ENCODE measurements at regions of chr2 and their contacts with region 1.

Region 1: DNA sequence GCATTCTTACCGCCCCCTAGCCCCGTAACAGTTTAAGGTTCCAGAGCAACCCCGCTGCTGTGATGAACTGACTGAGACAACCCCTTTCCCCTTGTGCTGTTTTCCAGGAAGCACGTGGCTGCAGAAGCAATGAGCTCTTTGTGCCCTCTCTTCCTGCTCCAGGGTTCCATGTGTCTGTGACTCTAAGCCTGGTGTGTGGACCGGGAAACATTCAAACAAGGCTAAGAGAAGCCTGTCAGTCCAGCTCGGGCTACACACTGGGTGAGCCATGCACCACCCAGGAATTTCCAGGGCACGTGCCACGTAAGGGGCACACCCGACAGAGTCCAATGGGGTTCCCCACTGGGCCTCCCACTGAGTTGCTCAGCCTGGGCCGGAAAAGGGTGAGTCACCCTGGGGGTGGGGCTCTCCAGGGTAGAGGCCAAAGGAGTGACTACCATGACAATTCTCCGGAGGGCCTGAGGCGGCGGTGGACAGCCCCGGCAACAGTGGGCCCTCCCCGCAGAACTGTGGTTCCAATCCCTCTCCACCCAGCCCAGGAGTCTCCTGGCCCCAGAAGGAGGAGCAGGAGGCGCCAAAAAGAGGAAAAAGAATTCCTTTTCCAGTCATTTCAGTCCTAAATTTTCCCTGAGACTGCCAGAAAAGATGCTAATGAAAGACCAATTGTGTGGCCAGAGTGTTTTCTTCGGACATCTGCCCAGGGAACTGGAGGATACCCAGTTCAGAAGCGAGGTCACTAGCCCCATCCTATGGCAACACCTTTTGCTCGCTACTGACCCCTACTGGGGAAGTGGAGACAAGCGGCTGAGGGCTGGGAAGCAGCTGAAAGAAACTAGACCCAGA is 157.8 kb upstream of the SLC1A4 start:
- DNase-seq: peak; percentile 71 to 87 (median 74)
- H3K4me3 ChIP-seq: peak overlapping the region; percentile 33
- H3K4me3 Mint-ChIP-seq: peak overlapping the region; percentile 32 to 86 (median 67)
- H3K27ac ChIP-seq: no peak overlapping the region
- H3K27ac Mint-ChIP-seq: peak overlapping the region in 7 of 8 donors; percentile 6 to 97 (median 61)
- H3K4me1 ChIP-seq: peaks cover 10% of the 10 kb centered on the region
- H3K4me1 Mint-ChIP-seq: peaks cover 11 to 12% (median 11%) of the 10 kb centered on the region in 3 donors
- H3K27me3 ChIP-seq: no peaks in the 10 kb centered on the region
- H3K27me3 Mint-ChIP-seq: peaks cover 1 to 4% of the 10 kb centered on the region in 2 donors

Region 2: DNA sequence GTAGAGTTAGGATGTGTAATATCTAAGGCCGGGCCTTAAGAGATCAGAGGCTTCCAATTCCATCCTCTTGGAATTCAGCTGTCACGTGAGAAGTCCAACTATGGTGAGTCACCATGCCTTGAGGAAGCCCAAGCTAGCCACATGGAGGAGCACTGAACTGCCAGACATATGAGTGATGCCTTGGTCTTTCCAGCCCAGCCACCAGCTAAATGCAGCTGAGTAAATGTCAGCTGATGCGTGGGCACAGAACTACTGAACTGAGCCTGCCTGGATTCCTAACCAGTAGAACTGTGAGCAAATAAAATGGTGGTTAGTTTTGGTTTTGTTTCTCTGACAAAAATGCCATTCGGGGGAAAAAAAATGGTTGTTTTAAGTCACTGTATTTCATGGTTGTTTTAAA is 23.9 kb before region 1 on chr2:
- CTCF ChIA-PET with region 1: no interaction called
- POLR2A ChIA-PET with region 1: no interaction called
- DNase-seq: no peak
- H3K4me3 ChIP-seq: no peak overlapping the region
- H3K4me3 Mint-ChIP-seq: no peak overlapping the region
- H3K27ac ChIP-seq: no peak overlapping the region
- H3K27ac Mint-ChIP-seq: no peak overlapping the region
- H3K4me1 ChIP-seq: no peaks in the 10 kb centered on the region
- H3K4me1 Mint-ChIP-seq: peaks cover 5 to 7% (median 7%) of the 10 kb centered on the region in 3 donors
- H3K27me3 ChIP-seq: no peaks in the 10 kb centered on the region
- H3K27me3 Mint-ChIP-seq: peaks cover 0 to 2% of the 10 kb centered on the region in 2 donors

Region 3: DNA sequence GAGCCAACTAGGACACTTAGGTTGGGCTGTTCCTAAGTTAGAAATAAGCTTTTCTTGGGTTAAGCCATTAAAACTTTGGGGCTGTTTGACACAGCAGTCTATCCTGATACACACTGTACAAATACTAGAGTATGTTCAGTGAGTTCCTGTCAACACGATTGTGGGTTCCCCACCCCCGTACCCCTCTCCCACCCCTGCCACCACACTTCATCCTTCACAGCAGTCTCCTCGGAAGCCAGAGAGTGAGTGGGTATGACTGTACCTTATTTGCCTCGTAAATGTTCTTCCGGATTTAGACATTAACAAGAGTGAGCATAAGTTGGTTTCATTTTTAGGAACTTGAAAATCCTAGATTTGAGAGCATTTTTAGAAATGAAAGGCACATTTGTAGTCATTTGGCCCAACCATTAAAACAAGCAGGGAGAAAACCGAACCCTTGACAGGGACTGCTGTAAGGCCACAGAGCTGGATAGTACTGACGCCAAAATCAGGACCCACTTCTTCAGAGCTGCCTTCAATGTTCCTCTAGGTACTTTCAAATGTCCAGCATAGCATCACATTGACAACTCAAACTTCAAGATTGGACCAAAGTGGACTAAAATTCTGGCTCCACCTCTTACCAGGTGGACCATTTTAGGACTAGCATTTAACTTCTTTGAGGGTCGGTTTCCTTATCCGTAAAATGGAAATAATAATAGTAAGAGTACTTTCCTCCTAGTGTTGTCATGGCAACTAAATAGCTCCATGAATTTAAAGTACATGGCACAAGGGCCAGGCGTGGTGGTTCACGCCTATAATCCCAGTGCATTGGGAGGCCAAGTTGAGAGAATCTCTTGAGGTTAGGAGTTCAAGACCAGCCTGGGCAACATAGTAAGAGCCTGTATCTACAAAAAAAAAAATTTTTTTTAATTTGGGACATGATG is 11.3 kb before region 1 on chr2:
- CTCF ChIA-PET with region 1: interaction called, 31 read pairs
- POLR2A ChIA-PET with region 1: interaction called, 3 read pairs
- DNase-seq: peak in 4 of 5 donors; percentile 4 to 70 (median 62)
- H3K4me3 ChIP-seq: peak overlapping the region; percentile 42
- H3K4me3 Mint-ChIP-seq: peak overlapping the region; percentile 51 to 76 (median 71)
- H3K27ac ChIP-seq: peak overlapping the region; percentile 51
- H3K27ac Mint-ChIP-seq: peak overlapping the region; percentile 79 to 97 (median 92)
- H3K4me1 ChIP-seq: peaks cover 25% of the 10 kb centered on the region
- H3K4me1 Mint-ChIP-seq: peaks cover 20 to 31% (median 23%) of the 10 kb centered on the region in 3 donors
- H3K27me3 ChIP-seq: no peaks in the 10 kb centered on the region
- H3K27me3 Mint-ChIP-seq: no peaks in the 10 kb centered on the region

Measured in CD8-positive, alpha-beta memory T cell (primary cell).